ENCODE measurements at regions of chr22 and their contacts with region 1.

Region 1: GRCh38 chr22:41576877-41577276 is 12.8 kb downstream of the PMM1 start:
- DNase-seq: peak; percentile 43
- H3K4me3 ChIP-seq: no peak overlapping the region
- H3K27ac ChIP-seq: no peak overlapping the region
- H3K4me1 ChIP-seq: no peaks in the 10 kb centered on the region
- H3K27me3 ChIP-seq: no peaks in the 10 kb centered on the region
- CTCF ChIP-seq: peak; percentile 70 to 74

Region 2: DNA sequence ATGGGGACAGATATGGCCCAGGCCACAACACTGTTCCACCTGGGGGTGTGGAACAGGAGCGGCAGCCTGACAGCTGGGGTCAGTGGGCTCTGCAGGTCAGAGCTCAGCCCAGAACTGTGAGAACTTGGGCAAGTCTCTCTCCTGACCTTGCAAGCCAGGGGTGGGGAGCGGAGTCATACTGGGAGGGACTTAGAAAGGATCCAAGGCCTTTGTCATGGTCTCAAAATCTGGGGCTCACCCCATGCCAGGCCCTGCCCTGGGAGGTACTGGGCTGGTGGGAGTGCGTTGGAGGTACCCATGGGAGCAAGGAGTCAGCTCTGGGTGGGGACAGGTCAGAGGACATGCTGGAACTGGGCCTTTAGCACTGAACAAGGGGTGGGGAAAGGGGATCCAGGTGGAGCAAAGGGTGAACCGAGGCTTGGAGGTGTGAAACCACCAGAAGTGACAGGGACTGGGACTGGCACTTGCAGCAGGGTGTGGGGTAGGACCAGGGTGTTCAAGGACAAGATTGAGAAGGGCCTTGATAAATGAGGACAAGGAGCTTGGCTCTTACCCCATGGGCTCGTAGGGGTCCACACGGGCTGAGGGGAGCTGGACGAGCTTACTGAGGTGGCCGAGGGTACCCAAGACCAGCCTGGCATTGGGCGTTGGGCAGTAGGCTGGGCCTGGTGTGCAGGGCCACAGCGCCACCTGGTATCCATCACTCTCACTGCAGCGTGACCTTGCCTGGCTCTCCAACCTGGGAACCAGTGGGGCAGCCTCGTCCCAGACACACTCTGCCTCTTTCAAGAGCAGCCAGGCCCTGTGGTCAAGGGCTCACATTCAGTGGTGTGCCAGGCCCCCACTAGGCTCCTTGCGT is 20.1 kb after region 1 on chr22:
- CTCF ChIA-PET with region 1: no interaction called
- dilution Hi-C with region 1: no loop called
- in situ Hi-C with region 1: no loop called
- intact Hi-C with region 1: loop called (anchors 1 kb)
- DNase-seq: peak; percentile 66
- H3K4me3 ChIP-seq: no peak overlapping the region
- H3K27ac ChIP-seq: peak overlapping the region; percentile 75
- H3K4me1 ChIP-seq: peaks cover 31% of the 10 kb centered on the region
- H3K27me3 ChIP-seq: no peaks in the 10 kb centered on the region
- CTCF ChIP-seq: peak; percentile 81 to 97

Region 3: DNA sequence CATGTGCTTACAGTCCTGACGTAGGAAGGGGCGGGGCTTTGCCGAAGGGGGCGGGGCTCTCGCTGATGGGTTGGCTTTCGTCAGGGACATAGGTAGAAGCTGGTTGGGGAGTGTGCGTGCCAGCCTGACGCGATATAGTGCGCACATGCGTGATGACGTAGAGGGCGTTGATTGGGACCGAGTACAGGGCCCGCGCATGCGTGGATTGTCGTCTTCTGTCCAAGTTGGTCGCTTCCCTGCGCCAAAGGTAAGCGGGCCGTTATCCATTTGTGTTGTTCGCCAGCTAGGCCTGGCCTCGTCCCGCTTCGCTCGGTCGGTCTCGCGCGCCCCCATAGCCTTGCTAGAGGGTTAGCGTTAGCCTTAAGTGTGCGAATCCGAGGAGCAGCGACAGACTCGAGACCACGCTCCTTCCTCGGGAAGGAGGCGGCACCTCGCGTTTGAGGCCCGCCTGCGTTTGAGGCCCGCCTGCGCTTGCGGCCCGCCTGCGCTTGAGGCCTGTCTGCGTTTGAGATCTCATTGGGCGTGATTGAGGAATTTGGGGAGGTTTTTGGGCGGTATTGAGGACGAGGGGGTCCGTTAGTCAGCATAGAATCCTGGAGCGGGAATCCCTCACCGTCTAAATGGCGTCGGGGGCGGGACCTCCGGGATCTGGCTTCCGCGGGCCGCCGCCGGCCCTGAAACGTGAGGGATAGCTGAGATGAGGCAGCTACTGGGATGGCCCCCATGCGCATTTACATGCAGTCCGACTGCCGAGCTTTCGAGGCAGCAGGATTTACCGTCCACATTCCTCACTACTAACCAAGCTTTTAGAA is 44.4 kb after region 1 on chr22 and contains the start of gene XRCC6:
- CTCF ChIA-PET with region 1: no interaction called
- dilution Hi-C with region 1: no loop called
- in situ Hi-C with region 1: no loop called
- intact Hi-C with region 1: loop called (anchors 2 kb)
- DNase-seq: peak; percentile 98
- H3K4me3 ChIP-seq: peak within 1 kb of the TSS; percentile 74 to 98 (median 88)
- H3K27ac ChIP-seq: peak within 1 kb of the TSS; percentile 83
- H3K4me1 ChIP-seq: peaks cover 15% of the 10 kb centered on the region
- H3K27me3 ChIP-seq: no peaks in the 10 kb centered on the region
- CTCF ChIP-seq: no peak
- total RNA-seq, gene XRCC6: 223 to 263 TPM

Region 4: DNA sequence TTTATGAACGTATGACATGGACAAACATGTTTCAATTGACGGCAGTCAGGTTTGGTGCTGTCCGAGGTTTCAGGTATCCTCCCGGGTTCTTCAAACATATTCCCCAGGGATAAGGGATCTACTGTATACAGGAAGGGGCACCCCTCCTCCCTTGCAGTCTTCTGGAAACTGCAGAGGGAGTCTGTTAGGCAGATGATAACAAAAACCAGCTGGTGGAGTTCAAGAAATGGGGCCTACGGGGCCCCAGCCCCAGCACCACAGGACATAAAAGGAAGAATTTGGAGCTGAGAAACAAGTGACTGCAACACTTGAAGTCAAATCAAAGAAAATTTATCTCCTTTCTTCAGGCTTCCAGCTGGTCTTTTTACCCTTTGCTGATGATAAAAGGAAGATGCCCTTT is 79.7 kb after region 1 on chr22:
- CTCF ChIA-PET with region 1: no interaction called
- dilution Hi-C with region 1: loop called (anchors 5 kb)
- in situ Hi-C with region 1: no loop called
- intact Hi-C with region 1: no loop called
- DNase-seq: no peak
- H3K4me3 ChIP-seq: no peak overlapping the region
- H3K27ac ChIP-seq: no peak overlapping the region
- H3K4me1 ChIP-seq: no peaks in the 10 kb centered on the region
- H3K27me3 ChIP-seq: no peaks in the 10 kb centered on the region
- CTCF ChIP-seq: no peak

Measured in mammary epithelial cell (primary cell).